RWPE1 (cell line): ENCODE measurements at regions of chr1 and their contacts with region 1.

Region 1: DNA sequence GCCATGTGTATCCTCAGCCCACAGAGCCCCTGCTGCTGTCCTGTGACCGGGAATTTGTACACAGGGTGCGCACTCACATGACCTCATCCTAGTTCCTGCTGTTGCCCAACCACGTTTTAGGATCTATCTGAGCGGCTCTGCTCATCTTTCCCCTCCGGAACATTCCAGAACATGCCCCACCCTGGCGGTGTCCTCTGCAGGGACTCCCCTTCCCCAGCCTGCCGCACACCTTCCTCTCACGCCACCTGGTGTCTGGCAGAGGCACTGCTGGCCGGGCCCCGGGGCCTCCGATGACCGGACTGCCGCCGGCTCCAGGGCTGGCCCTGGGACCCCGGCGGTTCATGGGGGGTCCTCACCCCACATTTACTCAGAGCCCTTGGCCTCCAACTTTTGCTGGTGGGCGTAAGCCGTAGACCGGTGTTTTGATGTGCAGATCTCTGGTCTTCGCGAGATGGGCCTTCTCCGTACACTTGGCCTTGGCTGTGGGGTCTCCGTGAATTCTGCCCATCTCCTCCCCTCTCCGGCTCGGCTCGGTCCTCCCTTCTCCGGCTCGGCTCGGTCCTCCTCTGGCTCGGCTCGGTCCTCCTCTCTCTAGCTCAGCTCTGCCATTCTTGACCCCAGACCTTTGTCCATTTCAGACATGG is 29.5 kb downstream of the ARHGEF16 start:
- DNase-seq: peak; percentile 66
- H3K27ac ChIP-seq: peak overlapping the region; percentile 95
- CTCF ChIP-seq: peak; percentile 94

Region 2: GRCh38 chr1:3471302-3472087 is 12.4 kb before region 1 on chr1:
- CTCF ChIA-PET with region 1: interaction called, 16 read pairs
- POLR2A ChIA-PET with region 1: interaction called, 5 read pairs
- DNase-seq: peak; percentile 65
- H3K27ac ChIP-seq: peak overlapping the region; percentile 95
- CTCF ChIP-seq: no peak; the same call in 1 of the 2 replicates